Keratinocyte (primary cell): ENCODE measurements at regions of chr7 and their contacts with region 1.

Region 1: DNA sequence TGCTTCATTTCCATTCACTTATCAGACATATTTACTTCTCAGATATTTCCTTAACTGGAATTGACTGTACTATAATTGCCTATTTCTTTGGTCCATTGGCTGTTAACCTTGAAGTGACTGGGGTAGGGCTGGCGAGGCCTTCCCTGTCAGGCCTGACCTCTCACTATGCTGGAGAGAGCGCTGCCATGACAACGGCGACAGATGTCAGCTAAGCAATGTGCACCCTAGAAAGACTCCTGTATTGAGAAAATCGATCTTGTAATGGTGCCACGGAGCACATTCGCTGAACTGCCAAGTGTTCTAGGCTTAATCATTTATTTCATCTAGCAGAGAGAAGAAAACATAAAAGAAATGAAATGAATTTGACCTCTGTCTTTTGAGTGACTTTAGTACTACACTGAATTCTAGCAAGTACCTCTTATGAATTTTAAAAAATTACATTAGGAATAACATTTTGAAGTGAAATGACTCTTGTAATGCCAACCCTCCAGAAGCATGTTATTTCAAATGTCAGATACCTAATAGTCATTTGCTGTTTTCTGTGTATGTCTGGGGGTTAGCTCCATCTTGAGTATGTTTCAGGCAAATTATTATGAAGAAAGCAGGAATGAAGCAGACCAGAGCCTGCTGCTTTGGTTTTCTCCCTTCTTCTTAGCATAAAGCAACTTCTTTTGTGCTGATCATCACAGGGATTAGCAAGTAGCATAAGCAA is 148.0 kb downstream of the SNX10 start:
- DNase-seq: no peak
- H3K4me3 ChIP-seq: no peak overlapping the region
- H3K27ac ChIP-seq: no peak overlapping the region
- H3K4me1 ChIP-seq: no peaks in the 10 kb centered on the region
- H3K27me3 ChIP-seq: no peaks in the 10 kb centered on the region
- CTCF ChIP-seq: no peak

Region 2: GRCh38 chr7:26490650-26491624 is 51.3 kb after region 1 on chr7:
- dilution Hi-C with region 1: loop called (anchors 5 kb)
- DNase-seq: peak; percentile 84
- H3K4me3 ChIP-seq: peak overlapping the region in 1 of 3 experiments; percentile 7
- H3K27ac ChIP-seq: no peak overlapping the region
- H3K4me1 ChIP-seq: peaks cover 16% of the 10 kb centered on the region
- H3K27me3 ChIP-seq: no peaks in the 10 kb centered on the region
- CTCF ChIP-seq: peak in 2 of 3 experiments; percentile 17 to 23